Psoas muscle (tissue), 8 donors: ENCODE measurements at regions of chr10 and their contacts with region 1.

Region 1: DNA sequence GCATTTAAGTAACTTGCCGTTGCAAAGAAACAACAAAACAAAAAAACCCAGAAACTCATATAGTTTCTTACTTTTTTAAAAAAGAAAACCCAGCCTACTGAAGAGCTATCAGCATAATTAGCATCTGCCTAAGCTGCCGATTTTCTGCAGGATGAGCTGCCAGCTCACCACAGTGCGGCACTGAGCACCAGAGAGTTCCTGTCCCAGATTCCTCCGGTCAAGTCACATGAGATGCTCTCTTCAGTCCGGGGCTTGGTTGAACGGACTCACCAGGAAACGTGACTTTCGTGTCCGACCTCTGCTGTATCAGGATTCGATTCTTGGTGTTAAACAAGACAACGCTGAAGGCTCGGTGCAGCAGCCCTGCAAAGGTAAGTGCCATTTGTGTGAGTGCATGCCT is 3.2 kb downstream of the IDI2 start:
- DNase-seq: peak in 1 of 2 donors; percentile 70
- ATAC-seq: peak; percentile 63 to 77 (median 70)
- H3K4me3 ChIP-seq: peak overlapping the region; percentile 51
- H3K27ac ChIP-seq: peak overlapping the region; percentile 88
- H3K4me1 ChIP-seq: peaks cover 24% of the 10 kb centered on the region
- H3K27me3 ChIP-seq: no peaks in the 10 kb centered on the region
- CTCF ChIP-seq: no peak

Region 2: DNA sequence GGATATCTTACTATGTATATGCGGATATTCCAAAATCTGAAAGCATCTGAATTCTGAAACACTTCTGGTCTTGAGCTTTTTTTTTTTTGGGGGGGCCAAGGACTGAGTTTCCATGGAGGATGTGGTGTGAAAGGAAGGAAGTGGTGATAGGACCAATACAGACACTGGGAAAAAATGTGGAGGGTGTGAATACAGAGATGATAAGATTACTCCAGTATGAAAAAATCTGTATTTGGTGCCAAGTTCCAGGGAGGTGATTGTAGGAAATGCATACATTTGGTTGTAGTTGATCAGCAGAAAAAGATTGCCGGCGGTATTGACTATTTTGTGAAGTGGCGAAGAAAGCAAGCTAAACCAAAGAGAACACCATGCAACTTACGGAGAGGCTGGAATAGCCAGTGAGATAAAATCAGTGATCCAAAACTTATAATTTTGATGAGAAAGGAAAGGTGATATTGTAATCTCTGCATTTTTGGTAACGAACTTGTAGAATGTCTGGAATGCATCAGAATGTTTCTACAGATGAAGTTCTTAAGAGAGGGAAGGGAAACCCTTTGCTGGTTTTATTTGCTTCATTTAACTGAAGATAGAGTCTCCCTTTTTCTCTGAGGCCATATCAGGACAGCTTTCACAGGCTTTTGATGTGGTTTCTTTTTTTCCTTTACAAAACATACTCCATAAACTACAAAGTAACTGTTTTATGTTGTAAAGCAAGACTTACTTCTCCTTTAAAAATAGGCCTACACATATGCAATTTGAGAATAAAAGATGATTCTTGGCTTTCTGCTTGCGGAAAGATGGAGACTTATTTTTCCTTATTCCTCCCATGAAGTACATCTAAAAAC is 39.7 kb after region 1 on chr10:
- intact Hi-C with region 1: loop called in 1 of 2 experiments (anchors 5 kb)
- DNase-seq: no peak
- ATAC-seq: no peak
- H3K4me3 ChIP-seq: no peak overlapping the region
- H3K27ac ChIP-seq: no peak overlapping the region
- H3K4me1 ChIP-seq: peaks cover 36% of the 10 kb centered on the region
- H3K27me3 ChIP-seq: no peaks in the 10 kb centered on the region
- CTCF ChIP-seq: no peak

Region 3: DNA sequence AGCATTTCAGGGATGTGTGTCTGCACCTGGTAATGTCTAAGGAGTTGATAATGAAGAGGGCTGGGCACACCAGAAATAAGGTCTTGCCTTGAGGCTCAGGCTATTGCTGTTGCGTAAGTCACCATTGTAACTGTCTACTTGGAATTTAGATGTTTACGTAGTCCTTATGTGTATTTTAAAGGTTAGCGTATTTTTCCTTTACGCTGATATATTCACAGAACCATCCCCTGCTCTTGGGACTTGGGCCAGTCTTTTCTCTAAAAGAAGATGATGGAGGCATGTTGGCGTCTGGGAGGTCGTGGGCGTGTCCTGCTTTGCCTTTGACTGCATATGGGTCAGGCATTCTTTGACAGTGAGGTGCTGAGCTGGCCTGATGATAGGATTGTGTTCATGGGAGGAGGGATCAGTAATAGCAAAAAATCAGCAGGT is 48.5 kb after region 1 on chr10:
- intact Hi-C with region 1: loop called in 1 of 2 experiments (anchors 2 kb)
- DNase-seq: no peak
- ATAC-seq: peak in 3 of 4 donors; percentile 44 to 59 (median 57)
- H3K4me3 ChIP-seq: no peak overlapping the region
- H3K27ac ChIP-seq: no peak overlapping the region
- H3K4me1 ChIP-seq: no peaks in the 10 kb centered on the region
- H3K27me3 ChIP-seq: no peaks in the 10 kb centered on the region
- CTCF ChIP-seq: no peak